Naive thymus-derived CD4-positive, alpha-beta T cell (primary cell): ENCODE measurements at regions of chr20 and their contacts with region 1.

Region 1: GRCh38 chr20:5001174-5002076 is at the start of gene SLC23A2:
- DNase-seq: peak; percentile 39 to 72 (median 55)
- ATAC-seq: peak; percentile 93
- H3K4me3 ChIP-seq: peak within 1 kb of the TSS; percentile 93
- H3K4me3 Mint-ChIP-seq: peak within 1 kb of the TSS; percentile 89 to 99 (median 92)
- H3K27ac ChIP-seq: peak within 1 kb of the TSS; percentile 75
- H3K27ac Mint-ChIP-seq: peak within 1 kb of the TSS; percentile 84 to 97 (median 87)
- H3K4me1 ChIP-seq: peaks cover 14 to 17% of the 10 kb centered on the region in 2 donors
- H3K4me1 Mint-ChIP-seq: peaks cover 33 to 48% (median 36%) of the 10 kb centered on the region in 7 donors
- H3K27me3 ChIP-seq: no peaks in the 10 kb centered on the region
- H3K27me3 Mint-ChIP-seq: peaks cover 0 to 15% (median 0%) of the 10 kb centered on the region in 5 donors
- total RNA-seq, gene SLC23A2: 19.2 to 32.4 (median 29.6) TPM

Region 2: DNA sequence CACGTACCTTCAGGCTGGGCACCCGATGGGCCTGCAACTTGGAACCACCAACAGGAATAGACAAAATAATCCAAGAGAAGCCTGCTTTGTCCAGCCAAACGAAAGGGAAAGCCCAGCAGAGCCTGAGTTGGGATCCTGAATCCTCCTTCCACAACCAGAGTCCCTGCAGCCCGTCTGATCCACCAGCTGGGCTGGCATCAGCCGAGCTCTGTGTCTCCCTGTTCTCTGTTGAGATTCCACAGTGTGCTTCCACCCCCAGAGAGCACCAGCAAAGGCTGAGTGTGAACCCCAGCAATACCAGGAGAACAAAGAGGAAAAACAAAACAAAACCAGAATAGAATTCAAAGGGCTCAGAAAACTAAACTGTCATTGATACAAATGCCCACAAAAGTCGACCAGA is 383.9 kb before region 1 on chr20:
- CTCF ChIA-PET with region 1: no interaction called
- POLR2A ChIA-PET with region 1: no interaction called
- intact Hi-C with region 1: no loop called
- DNase-seq: no peak
- ATAC-seq: no peak
- H3K4me3 ChIP-seq: no peak overlapping the region
- H3K4me3 Mint-ChIP-seq: no peak overlapping the region
- H3K27ac ChIP-seq: no peak overlapping the region
- H3K27ac Mint-ChIP-seq: no peak overlapping the region
- H3K4me1 ChIP-seq: peaks cover 0 to 3% of the 10 kb centered on the region in 2 donors
- H3K4me1 Mint-ChIP-seq: peaks cover 0 to 2% (median 0%) of the 10 kb centered on the region in 7 donors
- H3K27me3 ChIP-seq: no peaks in the 10 kb centered on the region
- H3K27me3 Mint-ChIP-seq: peaks cover 7 to 40% (median 9%) of the 10 kb centered on the region in 5 donors

Region 3: GRCh38 chr20:4684837-4685413 is 316.5 kb before region 1 on chr20:
- CTCF ChIA-PET with region 1: no interaction called
- POLR2A ChIA-PET with region 1: no interaction called
- intact Hi-C with region 1: loop called in 1 of 2 experiments (anchors 5 kb)
- DNase-seq: no peak
- ATAC-seq: no peak
- H3K4me3 ChIP-seq: no peak overlapping the region
- H3K4me3 Mint-ChIP-seq: peak overlapping the region in 9 of 10 donors; percentile 16 to 88 (median 85)
- H3K27ac ChIP-seq: peak overlapping the region; percentile 93
- H3K27ac Mint-ChIP-seq: peak overlapping the region; percentile 41 to 98 (median 89)
- H3K4me1 ChIP-seq: peaks cover 28 to 30% of the 10 kb centered on the region in 2 donors
- H3K4me1 Mint-ChIP-seq: peaks cover 35 to 59% (median 53%) of the 10 kb centered on the region in 7 donors
- H3K27me3 ChIP-seq: no peaks in the 10 kb centered on the region
- H3K27me3 Mint-ChIP-seq: peaks cover 0 to 13% (median 0%) of the 10 kb centered on the region in 5 donors

Region 4: GRCh38 chr20:4961746-4962145 is 39.7 kb before region 1 on chr20:
- CTCF ChIA-PET with region 1: no interaction called
- POLR2A ChIA-PET with region 1: interaction called, 3 read pairs
- intact Hi-C with region 1: loop called in 1 of 2 experiments (anchors 1 kb)
- DNase-seq: peak in 7 of 9 donors; percentile 21 to 48 (median 30)
- ATAC-seq: peak; percentile 89
- H3K4me3 ChIP-seq: no peak overlapping the region
- H3K4me3 Mint-ChIP-seq: peak overlapping the region in 9 of 10 donors; percentile 30 to 83 (median 61)
- H3K27ac ChIP-seq: peak overlapping the region; percentile 47
- H3K27ac Mint-ChIP-seq: peak overlapping the region; percentile 87 to 97 (median 90)
- H3K4me1 ChIP-seq: peaks cover 15 to 16% of the 10 kb centered on the region in 2 donors
- H3K4me1 Mint-ChIP-seq: peaks cover 13 to 29% (median 24%) of the 10 kb centered on the region in 7 donors
- H3K27me3 ChIP-seq: no peaks in the 10 kb centered on the region
- H3K27me3 Mint-ChIP-seq: no peaks in the 10 kb centered on the region

Region 5: DNA sequence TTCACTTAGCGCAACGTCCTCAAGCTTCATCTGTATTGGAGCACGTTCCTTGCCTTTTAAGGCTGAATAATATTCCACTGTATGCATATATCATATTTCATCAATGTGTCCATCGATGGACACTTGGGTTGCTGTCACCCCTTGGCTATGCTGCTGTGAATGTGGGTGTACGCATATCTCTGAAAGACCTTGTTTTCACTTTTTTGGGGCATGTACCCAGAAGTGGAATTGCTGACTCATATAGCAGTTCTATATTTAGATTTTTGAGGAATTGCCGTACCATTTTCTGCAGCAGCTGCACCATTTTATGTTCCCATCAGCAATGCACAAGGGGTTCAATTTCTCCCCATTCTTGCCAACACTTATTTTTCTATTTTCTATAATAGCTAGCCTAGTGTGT is 22.7 kb after region 1 on chr20:
- CTCF ChIA-PET with region 1: no interaction called
- POLR2A ChIA-PET with region 1: no interaction called
- intact Hi-C with region 1: no loop called
- DNase-seq: no peak
- ATAC-seq: no peak
- H3K4me3 ChIP-seq: no peak overlapping the region
- H3K4me3 Mint-ChIP-seq: no peak overlapping the region
- H3K27ac ChIP-seq: no peak overlapping the region
- H3K27ac Mint-ChIP-seq: no peak overlapping the region
- H3K4me1 ChIP-seq: no peaks in the 10 kb centered on the region
- H3K4me1 Mint-ChIP-seq: peaks cover 0 to 2% (median 0%) of the 10 kb centered on the region in 7 donors
- H3K27me3 ChIP-seq: no peaks in the 10 kb centered on the region
- H3K27me3 Mint-ChIP-seq: no peaks in the 10 kb centered on the region

Region 6: DNA sequence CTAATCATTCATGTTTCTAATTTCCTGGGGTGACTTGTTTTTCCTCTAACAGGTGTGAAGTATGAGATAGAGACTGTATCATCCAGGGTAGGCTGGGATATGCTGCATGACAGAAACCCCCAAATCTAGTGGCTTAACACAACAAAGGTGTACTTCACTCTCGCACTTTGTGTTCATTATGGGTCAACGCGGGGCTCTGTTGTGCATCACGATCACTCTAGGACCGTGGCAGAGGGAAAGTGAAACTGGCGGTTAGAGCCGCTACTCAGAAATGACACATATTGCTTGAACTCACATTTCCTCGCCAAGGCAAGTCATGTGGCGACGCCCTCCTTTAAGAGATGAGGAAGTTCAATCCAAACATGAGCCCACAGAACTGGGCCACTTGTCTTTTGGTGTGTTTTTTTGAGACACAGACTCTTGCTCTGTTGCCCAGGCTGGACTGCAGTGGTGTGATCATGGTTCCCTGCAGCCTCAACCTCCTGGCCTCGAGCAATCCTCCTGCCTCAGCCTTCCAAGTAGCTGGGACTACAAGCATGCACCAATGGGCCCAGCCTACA is 77.1 kb after region 1 on chr20:
- CTCF ChIA-PET with region 1: no interaction called
- POLR2A ChIA-PET with region 1: interaction called, 5 read pairs
- intact Hi-C with region 1: loop called (anchors 1 kb)
- DNase-seq: peak; percentile 39 to 78 (median 74)
- ATAC-seq: peak; percentile 95
- H3K4me3 ChIP-seq: peak overlapping the region; percentile 33
- H3K4me3 Mint-ChIP-seq: peak overlapping the region; percentile 61 to 92 (median 89)
- H3K27ac ChIP-seq: peak overlapping the region; percentile 79
- H3K27ac Mint-ChIP-seq: peak overlapping the region; percentile 97 to 100 (median 99)
- H3K4me1 ChIP-seq: peaks cover 16 to 25% of the 10 kb centered on the region in 2 donors
- H3K4me1 Mint-ChIP-seq: peaks cover 24 to 54% (median 32%) of the 10 kb centered on the region in 7 donors
- H3K27me3 ChIP-seq: no peaks in the 10 kb centered on the region
- H3K27me3 Mint-ChIP-seq: no peaks in the 10 kb centered on the region

Region 7: GRCh38 chr20:5168651-5169396 is 167.4 kb after region 1 on chr20:
- CTCF ChIA-PET with region 1: no interaction called
- POLR2A ChIA-PET with region 1: no interaction called
- intact Hi-C with region 1: no loop called
- DNase-seq: no peak
- ATAC-seq: peak; percentile 37
- H3K4me3 ChIP-seq: no peak overlapping the region
- H3K4me3 Mint-ChIP-seq: peak overlapping the region; percentile 11 to 77 (median 53)
- H3K27ac ChIP-seq: peak overlapping the region; percentile 37
- H3K27ac Mint-ChIP-seq: peak overlapping the region; percentile 77 to 93 (median 90)
- H3K4me1 ChIP-seq: peaks cover 0 to 21% of the 10 kb centered on the region in 2 donors
- H3K4me1 Mint-ChIP-seq: peaks cover 59 to 93% (median 74%) of the 10 kb centered on the region in 7 donors
- H3K27me3 ChIP-seq: no peaks in the 10 kb centered on the region
- H3K27me3 Mint-ChIP-seq: no peaks in the 10 kb centered on the region